BJ (cell line): ENCODE measurements at regions of chr11 and their contacts with region 1.

Region 1: DNA sequence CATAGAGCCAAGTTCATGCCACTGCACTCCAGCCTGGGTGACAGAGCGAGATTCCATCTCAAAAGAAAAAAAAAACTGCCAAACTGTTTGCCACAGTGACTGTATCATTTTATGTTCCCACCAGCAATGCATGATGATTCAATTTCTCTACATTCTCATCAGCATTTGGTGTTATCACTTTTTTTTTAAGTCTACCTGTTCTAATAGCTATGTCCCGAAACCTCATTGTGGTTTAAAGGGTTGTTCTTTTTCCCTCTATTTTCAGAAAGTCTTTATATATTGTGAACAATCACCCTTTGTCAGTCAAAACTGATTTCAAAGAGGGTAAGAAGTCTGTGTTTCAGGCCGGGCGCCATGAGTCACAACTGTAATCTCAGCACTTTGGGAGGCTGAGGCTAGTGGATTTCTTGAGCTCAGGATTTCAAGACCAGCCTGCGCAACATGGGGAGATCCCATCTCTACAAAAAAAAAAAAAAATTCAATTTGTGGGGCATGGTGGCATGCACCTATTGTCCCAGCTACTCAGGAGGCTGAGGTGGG is 14.8 kb upstream of the FAM168A start:
- DNase-seq: no peak
- H3K4me3 ChIP-seq: no peak overlapping the region
- H3K27me3 ChIP-seq: peaks cover 2% of the 10 kb centered on the region; the same call in 1 of the 2 replicates
- CTCF ChIP-seq: no peak

Region 2: GRCh38 chr11:73647459-73648100 is 34.9 kb after region 1 on chr11:
- CTCF ChIA-PET with region 1: no interaction called
- POLR2A ChIA-PET with region 1: interaction called, 17 read pairs
- DNase-seq: peak; percentile 30
- H3K4me3 ChIP-seq: peak overlapping the region; percentile 9; the same call in 1 of the 2 replicates
- H3K27me3 ChIP-seq: peaks cover 15% of the 10 kb centered on the region
- CTCF ChIP-seq: no peak

Region 3: DNA sequence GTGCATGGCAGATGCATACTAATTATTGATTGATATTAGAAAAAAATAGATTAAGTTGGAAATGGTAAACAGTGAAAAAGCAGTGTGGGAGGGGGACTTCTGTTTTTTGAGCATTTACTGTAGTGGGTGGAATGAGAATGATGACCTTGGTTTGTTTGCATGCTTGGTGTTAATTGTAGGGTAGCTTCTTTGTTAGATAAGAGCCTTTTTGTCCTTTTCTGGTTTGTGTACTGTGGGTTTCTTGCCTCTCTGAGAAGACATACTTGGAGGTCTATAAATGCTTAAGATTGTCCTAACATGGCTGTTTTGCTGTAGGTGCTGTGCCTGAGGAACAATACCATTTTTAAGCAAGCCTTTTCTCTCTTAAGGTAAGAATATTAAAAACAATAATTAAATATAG is 192.0 kb after region 1 on chr11:
- CTCF ChIA-PET with region 1: no interaction called
- POLR2A ChIA-PET with region 1: no interaction called
- DNase-seq: no peak
- H3K4me3 ChIP-seq: no peak overlapping the region
- H3K27me3 ChIP-seq: no peaks in the 10 kb centered on the region
- CTCF ChIP-seq: no peak